AG04449 (cell line): ENCODE measurements at regions of chr20 and their contacts with region 1.

Region 1: DNA sequence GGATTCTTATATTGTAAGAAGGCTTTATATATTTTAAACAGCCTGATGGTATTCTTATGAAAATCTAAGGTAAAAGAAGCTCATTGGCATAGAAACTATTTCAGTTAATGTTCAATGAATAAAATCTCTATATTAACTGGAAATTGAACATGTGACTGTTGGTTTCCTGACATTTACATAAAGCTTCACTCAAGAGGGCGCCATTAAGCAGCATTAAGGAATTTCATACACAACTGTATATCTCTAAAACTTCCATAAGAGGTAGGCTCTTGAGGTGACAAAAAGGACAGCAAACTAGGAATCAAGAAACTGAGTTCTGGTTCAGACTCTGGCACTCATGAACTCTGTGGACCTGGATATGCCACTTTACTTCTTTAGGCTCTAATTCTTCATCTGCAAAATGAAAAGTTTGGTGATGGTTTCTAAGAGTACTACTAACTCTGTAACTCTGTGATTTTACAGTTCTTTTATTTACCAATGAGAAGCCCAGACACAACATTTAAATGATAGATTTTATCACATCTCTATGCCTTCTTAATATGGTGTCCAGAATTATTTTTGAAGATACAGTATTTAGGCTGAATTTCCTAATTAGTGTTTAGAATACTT is 147.5 kb downstream of the FLRT3 start:
- DNase-seq: peak; percentile 7
- H3K4me3 ChIP-seq: no peak overlapping the region
- CTCF ChIP-seq: peak; percentile 39

Region 2: DNA sequence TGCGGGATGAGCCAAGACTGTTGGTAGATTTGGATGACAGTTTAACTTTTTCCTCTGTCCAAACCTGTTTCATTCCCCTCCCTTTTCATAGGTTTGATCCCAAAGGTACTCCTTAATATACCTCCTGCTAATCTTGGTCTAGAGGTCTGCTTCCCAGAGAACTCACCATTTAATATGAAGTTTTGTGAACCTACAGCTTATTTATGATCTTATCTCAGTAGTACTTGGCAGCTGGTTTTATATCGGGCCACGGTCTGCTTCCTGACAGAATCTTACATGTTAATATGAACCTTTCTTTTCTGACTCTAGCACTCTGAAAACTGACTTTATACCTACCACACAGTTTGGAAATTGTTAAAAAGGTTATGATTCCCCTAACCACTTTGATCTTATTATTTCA is 55.9 kb before region 1 on chr20:
- CTCF ChIA-PET with region 1: no interaction called
- POLR2A ChIA-PET with region 1: no interaction called
- DNase-seq: no peak
- H3K4me3 ChIP-seq: no peak overlapping the region
- CTCF ChIP-seq: no peak

Region 3: DNA sequence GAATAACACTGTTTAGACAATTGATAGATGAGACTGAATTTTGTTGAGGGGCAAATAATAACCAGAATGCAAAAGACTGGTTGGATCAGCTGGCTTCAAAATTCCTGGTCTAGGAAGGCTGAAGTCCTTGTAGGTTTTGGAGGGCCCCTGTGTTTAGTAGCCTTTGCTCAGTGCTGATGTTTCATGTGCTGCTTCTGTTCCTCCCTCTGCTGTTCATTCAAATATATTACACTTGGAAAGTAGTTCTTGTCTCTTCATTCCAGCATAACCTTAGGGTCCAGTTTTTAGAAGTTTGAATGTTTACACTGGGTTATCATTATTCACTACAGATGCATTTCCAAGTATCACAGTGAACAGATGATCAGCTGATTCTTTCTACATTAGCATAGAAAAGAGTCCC is 75.0 kb after region 1 on chr20:
- CTCF ChIA-PET with region 1: interaction called, 25 read pairs
- POLR2A ChIA-PET with region 1: no interaction called
- DNase-seq: peak; percentile 1
- H3K4me3 ChIP-seq: no peak overlapping the region
- CTCF ChIP-seq: peak; percentile 28

Region 4: GRCh38 chr20:14393659-14394058 is 203.8 kb after region 1 on chr20:
- CTCF ChIA-PET with region 1: no interaction called
- POLR2A ChIA-PET with region 1: no interaction called
- DNase-seq: no peak
- H3K4me3 ChIP-seq: no peak overlapping the region
- CTCF ChIP-seq: no peak